Mammary epithelial cell (primary cell): ENCODE measurements at regions of chr5 and their contacts with region 1.

Region 1: DNA sequence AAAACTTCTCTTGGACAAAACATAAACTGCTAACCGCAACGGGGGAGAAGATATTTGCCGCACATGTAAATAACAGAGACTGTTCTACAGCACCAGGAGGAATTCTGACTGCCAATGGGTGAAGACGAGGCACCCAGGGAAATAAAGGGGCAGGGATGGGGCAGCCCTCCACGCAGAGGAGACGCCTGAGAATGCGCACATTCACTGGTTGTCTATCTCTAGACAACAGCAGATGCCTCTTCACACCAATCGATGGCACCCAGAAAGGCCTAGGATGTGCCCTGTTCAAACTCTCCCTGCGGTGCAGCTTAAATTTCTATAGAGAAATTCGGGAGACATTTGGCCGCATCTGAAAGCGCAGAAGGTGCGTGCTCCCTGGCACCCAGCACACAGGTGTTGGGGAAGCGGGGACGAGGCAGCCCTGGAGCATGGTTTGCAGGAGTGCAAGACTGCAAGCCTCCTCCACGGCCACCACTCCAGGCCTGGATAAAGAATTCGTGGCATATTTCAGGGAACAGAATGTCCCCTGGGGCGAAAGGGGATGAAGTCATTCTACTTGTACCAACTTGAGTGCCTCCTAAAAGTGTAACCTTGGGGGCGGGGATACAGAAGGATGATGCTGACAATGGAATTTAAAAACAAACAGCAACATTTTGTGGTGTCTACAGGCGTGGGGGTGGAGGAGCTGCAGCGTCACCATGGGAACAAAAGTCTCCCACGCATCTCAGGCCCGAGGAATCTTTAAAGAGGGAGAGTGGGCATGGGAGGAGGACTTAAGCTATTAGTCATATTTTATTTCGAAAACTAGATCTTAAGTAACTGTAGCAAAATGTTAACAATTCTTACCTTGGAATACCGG is 6.3 kb upstream of the IRX2 start:
- DNase-seq: peak; percentile 99
- H3K4me3 ChIP-seq: no peak overlapping the region
- H3K27ac ChIP-seq: peak overlapping the region; percentile 83
- H3K4me1 ChIP-seq: peaks cover 56% of the 10 kb centered on the region
- H3K27me3 ChIP-seq: no peaks in the 10 kb centered on the region
- CTCF ChIP-seq: no peak

Region 2: GRCh38 chr5:2780394-2781171 is 22.8 kb after region 1 on chr5:
- CTCF ChIA-PET with region 1: interaction called, 3 read pairs
- dilution Hi-C with region 1: no loop called
- in situ Hi-C with region 1: no loop called
- intact Hi-C with region 1: loop called (anchors 1 kb)
- DNase-seq: peak; percentile 87
- H3K4me3 ChIP-seq: no peak overlapping the region
- H3K27ac ChIP-seq: peak overlapping the region; percentile 64
- H3K4me1 ChIP-seq: peaks cover 22% of the 10 kb centered on the region
- H3K27me3 ChIP-seq: no peaks in the 10 kb centered on the region
- CTCF ChIP-seq: peak in 1 of 2 donors; percentile 40

Region 3: DNA sequence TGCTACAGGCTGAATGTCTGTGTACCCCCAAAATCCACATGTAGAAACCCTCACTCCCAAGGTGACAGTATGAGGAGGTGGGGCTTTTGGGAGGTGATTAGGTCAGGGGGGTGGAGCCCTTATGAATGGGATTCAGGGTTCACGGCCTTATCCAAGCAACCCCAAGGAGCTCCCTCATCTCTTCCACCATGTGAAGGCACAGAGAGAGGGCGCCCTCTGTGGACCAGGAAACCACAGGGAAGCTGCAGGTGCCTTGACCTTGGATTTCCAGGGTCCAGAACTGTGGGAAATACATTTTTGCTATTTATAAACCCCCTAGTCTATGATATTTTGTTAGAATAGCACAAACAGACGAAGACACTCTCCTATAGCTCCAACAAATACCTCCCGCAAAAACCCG is 47.3 kb after region 1 on chr5:
- CTCF ChIA-PET with region 1: no interaction called
- dilution Hi-C with region 1: loop called (anchors 5 kb)
- in situ Hi-C with region 1: no loop called
- intact Hi-C with region 1: loop called (anchors 1 kb)
- DNase-seq: peak; percentile 26
- H3K4me3 ChIP-seq: no peak overlapping the region
- H3K27ac ChIP-seq: no peak overlapping the region
- H3K4me1 ChIP-seq: no peaks in the 10 kb centered on the region
- H3K27me3 ChIP-seq: no peaks in the 10 kb centered on the region
- CTCF ChIP-seq: peak; percentile 27 to 82

Region 4: DNA sequence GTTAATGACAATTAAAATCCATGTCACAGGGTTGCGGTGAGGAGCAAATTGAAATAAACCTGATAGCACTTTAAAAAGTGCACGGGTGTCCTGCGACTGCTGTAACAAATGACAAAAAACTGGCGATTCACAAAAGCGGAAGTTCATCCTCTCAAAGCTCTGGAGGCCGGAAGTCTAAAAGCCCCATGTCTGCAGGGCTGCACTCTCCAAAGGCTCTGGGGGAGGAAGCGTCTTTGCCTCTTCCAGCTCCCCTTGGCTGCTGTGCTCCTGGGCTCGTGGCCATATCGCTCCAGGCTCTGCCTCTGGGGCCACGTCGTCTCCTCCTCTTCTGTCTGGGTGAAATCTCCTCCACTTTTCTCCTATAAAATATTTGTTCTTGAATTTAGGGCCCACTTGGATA is 267.6 kb after region 1 on chr5:
- CTCF ChIA-PET with region 1: no interaction called
- dilution Hi-C with region 1: no loop called
- in situ Hi-C with region 1: no loop called
- intact Hi-C with region 1: no loop called
- DNase-seq: no peak
- H3K4me3 ChIP-seq: no peak overlapping the region
- H3K27ac ChIP-seq: no peak overlapping the region
- H3K4me1 ChIP-seq: no peaks in the 10 kb centered on the region
- H3K27me3 ChIP-seq: no peaks in the 10 kb centered on the region
- CTCF ChIP-seq: no peak